CD4-positive, alpha-beta memory T cell (primary cell): ENCODE measurements at regions of chr1 and their contacts with region 1.

Region 1: GRCh38 chr1:16621300-16621658 is 7.9 kb upstream of the NBPF1 start:
- DNase-seq: no peak
- H3K4me3 ChIP-seq: no peak overlapping the region
- H3K4me3 Mint-ChIP-seq: no peak overlapping the region
- H3K27ac ChIP-seq: no peak overlapping the region
- H3K27ac Mint-ChIP-seq: no peak overlapping the region
- H3K4me1 ChIP-seq: no peaks in the 10 kb centered on the region
- H3K4me1 Mint-ChIP-seq: peaks cover 0 to 3% (median 0%) of the 10 kb centered on the region in 4 donors
- H3K27me3 ChIP-seq: no peaks in the 10 kb centered on the region
- H3K27me3 Mint-ChIP-seq: no peaks in the 10 kb centered on the region

Region 2: DNA sequence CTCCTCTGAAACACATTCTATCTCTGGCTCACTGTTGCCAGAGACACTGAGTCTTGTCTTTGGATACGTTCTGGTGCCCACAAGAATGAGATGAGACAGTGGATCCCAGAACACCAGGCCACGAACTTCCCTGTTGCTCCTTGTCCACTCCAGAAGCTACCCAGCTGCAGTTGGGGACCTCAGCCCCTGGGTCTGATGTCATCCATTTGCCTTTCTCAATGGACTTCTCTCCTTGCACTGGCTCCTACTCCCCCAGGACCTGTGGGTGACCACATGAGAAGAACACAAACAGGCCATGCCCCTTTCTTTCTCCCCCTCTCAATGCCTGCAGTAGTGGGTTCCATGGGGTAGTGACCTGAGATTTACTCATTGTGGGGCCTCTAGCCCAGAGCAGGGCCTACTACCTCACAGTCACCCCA is 13.8 kb before region 1 on chr1:
- CTCF ChIA-PET with region 1: interaction called, 26 read pairs
- POLR2A ChIA-PET with region 1: interaction called, 3 read pairs
- intact Hi-C with region 1: no loop called
- DNase-seq: peak in 2 of 5 donors; percentile 3 to 32
- H3K4me3 ChIP-seq: no peak overlapping the region
- H3K4me3 Mint-ChIP-seq: no peak overlapping the region
- H3K27ac ChIP-seq: no peak overlapping the region
- H3K27ac Mint-ChIP-seq: no peak overlapping the region
- H3K4me1 ChIP-seq: peaks cover 9% of the 10 kb centered on the region
- H3K4me1 Mint-ChIP-seq: no peaks in the 10 kb centered on the region
- H3K27me3 ChIP-seq: no peaks in the 10 kb centered on the region
- H3K27me3 Mint-ChIP-seq: no peaks in the 10 kb centered on the region